ENCODE measurements at regions of chr17 and their contacts with region 1.

Region 1: GRCh38 chr17:64326395-64327054 is 63.5 kb upstream of the TEX2 start:
- DNase-seq: no peak
- H3K4me3 ChIP-seq: no peak overlapping the region
- H3K27ac ChIP-seq: no peak overlapping the region
- H3K4me1 ChIP-seq: peaks cover 15 to 18% of the 10 kb centered on the region in 2 experiments; a peak in 2 of 4 replicates
- H3K27me3 ChIP-seq: no peaks in the 10 kb centered on the region
- CTCF ChIP-seq: no peak
- EP300 ChIP-seq: no peak
- RAD21 ChIP-seq: no peak

Region 2: DNA sequence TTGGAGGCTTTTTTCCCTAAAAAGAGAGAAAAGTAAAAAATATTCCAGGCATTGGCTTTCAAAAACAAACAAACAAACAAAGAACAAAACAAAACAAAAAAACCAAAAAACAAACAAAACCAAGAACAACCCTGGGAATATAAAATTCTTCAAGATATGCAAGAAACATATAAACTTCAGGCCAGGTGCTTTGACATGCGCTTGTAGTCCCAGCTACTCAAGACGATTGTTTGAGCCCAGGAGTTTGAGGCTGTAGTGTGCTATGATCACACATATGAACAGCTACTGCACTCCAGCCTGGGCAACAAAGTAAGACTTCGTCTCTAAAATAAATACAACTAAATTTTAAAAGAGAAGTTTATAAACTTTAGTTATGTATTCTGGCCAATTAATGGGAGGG is 11.0 kb before region 1 on chr17:
- CTCF ChIA-PET with region 1: interaction called, 30 read pairs
- POLR2A ChIA-PET with region 1: no interaction called
- DNase-seq: no peak
- H3K4me3 ChIP-seq: no peak overlapping the region
- H3K27ac ChIP-seq: no peak overlapping the region
- H3K4me1 ChIP-seq: peaks cover 0 to 4% of the 10 kb centered on the region in 2 experiments; a peak in 1 of 4 replicates
- H3K27me3 ChIP-seq: no peaks in the 10 kb centered on the region
- CTCF ChIP-seq: no peak
- EP300 ChIP-seq: no peak
- RAD21 ChIP-seq: no peak

Region 3: GRCh38 chr17:64535357-64535756 is 208.8 kb after region 1 on chr17:
- CTCF ChIA-PET with region 1: no interaction called
- POLR2A ChIA-PET with region 1: no interaction called
- DNase-seq: no peak
- H3K4me3 ChIP-seq: no peak overlapping the region
- H3K27ac ChIP-seq: no peak overlapping the region
- H3K4me1 ChIP-seq: no peaks in the 10 kb centered on the region
- H3K27me3 ChIP-seq: no peaks in the 10 kb centered on the region
- CTCF ChIP-seq: no peak
- EP300 ChIP-seq: no peak
- RAD21 ChIP-seq: no peak

Region 4: DNA sequence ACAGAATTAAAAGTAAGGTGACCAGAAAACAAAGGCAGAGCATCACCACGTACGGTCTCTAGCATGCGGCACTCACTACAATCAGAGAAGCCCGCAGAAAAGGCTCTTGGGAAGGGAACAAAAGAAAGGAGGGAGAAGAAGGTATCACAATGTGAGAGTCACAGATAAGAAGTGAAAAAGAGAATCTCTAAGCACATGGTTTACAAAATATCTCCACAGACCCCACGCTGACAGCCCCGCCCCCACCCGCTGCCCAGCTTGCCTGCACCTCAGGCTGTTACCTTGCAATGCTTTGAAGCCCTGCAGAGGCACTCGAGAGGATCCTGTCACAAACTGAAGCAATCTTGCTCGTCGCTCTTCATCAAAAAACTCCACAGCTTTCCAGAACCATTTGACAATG is 220.8 kb after region 1 on chr17:
- CTCF ChIA-PET with region 1: no interaction called
- POLR2A ChIA-PET with region 1: no interaction called
- DNase-seq: no peak
- H3K4me3 ChIP-seq: no peak overlapping the region
- H3K27ac ChIP-seq: no peak overlapping the region; a peak in 1 of 4 replicates
- H3K4me1 ChIP-seq: no peaks in the 10 kb centered on the region
- H3K27me3 ChIP-seq: no peaks in the 10 kb centered on the region
- CTCF ChIP-seq: no peak
- EP300 ChIP-seq: no peak
- RAD21 ChIP-seq: no peak